CD4-positive, alpha-beta T cell (primary cell): ENCODE measurements at regions of chr12 and their contacts with region 1.

Region 1: GRCh38 chr12:14845350-14845750 is 2.0 kb upstream of the ART4 start:
- DNase-seq: peak in 12 of 14 experiments; percentile 8 to 74 (median 34)
- ATAC-seq: peak; percentile 68
- H3K4me3 ChIP-seq: no peak overlapping the region
- H3K4me3 Mint-ChIP-seq: no peak overlapping the region
- H3K27ac ChIP-seq: no peak overlapping the region
- H3K27ac Mint-ChIP-seq: no peak overlapping the region
- H3K4me1 ChIP-seq: peaks cover 3% of the 10 kb centered on the region
- H3K4me1 Mint-ChIP-seq: peaks cover 9% of the 10 kb centered on the region
- H3K27me3 ChIP-seq: no peaks in the 10 kb centered on the region
- H3K27me3 Mint-ChIP-seq: no peaks in the 10 kb centered on the region
- CTCF ChIP-seq: peak; percentile 79

Region 2: GRCh38 chr12:14873440-14874185 is 28.3 kb after region 1 on chr12:
- CTCF ChIA-PET with region 1: no interaction called
- POLR2A ChIA-PET with region 1: no interaction called
- intact Hi-C with region 1: no loop called
- DNase-seq: no peak
- ATAC-seq: no peak
- H3K4me3 ChIP-seq: no peak overlapping the region
- H3K4me3 Mint-ChIP-seq: no peak overlapping the region
- H3K27ac ChIP-seq: no peak overlapping the region
- H3K27ac Mint-ChIP-seq: no peak overlapping the region
- H3K4me1 ChIP-seq: no peaks in the 10 kb centered on the region
- H3K4me1 Mint-ChIP-seq: no peaks in the 10 kb centered on the region
- H3K27me3 ChIP-seq: peaks cover 0 to 2% of the 10 kb centered on the region in 2 experiments
- H3K27me3 Mint-ChIP-seq: no peaks in the 10 kb centered on the region
- CTCF ChIP-seq: no peak

Region 3: GRCh38 chr12:14884458-14884878 is 39.1 kb after region 1 on chr12:
- CTCF ChIA-PET with region 1: no interaction called
- POLR2A ChIA-PET with region 1: no interaction called
- intact Hi-C with region 1: loop called in 1 of 2 experiments (anchors 5 kb)
- DNase-seq: peak; percentile 68 to 93 (median 82)
- ATAC-seq: peak; percentile 91
- H3K4me3 ChIP-seq: peak overlapping the region; percentile 7
- H3K4me3 Mint-ChIP-seq: peak overlapping the region; percentile 75
- H3K27ac ChIP-seq: no peak overlapping the region
- H3K27ac Mint-ChIP-seq: peak overlapping the region; percentile 86
- H3K4me1 ChIP-seq: peaks cover 11% of the 10 kb centered on the region
- H3K4me1 Mint-ChIP-seq: peaks cover 47% of the 10 kb centered on the region
- H3K27me3 ChIP-seq: no peaks in the 10 kb centered on the region
- H3K27me3 Mint-ChIP-seq: no peaks in the 10 kb centered on the region
- CTCF ChIP-seq: no peak

Region 4: GRCh38 chr12:14896521-14897169 is 51.3 kb after region 1 on chr12:
- CTCF ChIA-PET with region 1: no interaction called
- POLR2A ChIA-PET with region 1: no interaction called
- intact Hi-C with region 1: loop called in 1 of 2 experiments (anchors 5 kb)
- DNase-seq: no peak
- ATAC-seq: no peak
- H3K4me3 ChIP-seq: no peak overlapping the region
- H3K4me3 Mint-ChIP-seq: no peak overlapping the region
- H3K27ac ChIP-seq: no peak overlapping the region
- H3K27ac Mint-ChIP-seq: no peak overlapping the region
- H3K4me1 ChIP-seq: no peaks in the 10 kb centered on the region
- H3K4me1 Mint-ChIP-seq: no peaks in the 10 kb centered on the region
- H3K27me3 ChIP-seq: no peaks in the 10 kb centered on the region
- H3K27me3 Mint-ChIP-seq: no peaks in the 10 kb centered on the region
- CTCF ChIP-seq: no peak

Region 5: DNA sequence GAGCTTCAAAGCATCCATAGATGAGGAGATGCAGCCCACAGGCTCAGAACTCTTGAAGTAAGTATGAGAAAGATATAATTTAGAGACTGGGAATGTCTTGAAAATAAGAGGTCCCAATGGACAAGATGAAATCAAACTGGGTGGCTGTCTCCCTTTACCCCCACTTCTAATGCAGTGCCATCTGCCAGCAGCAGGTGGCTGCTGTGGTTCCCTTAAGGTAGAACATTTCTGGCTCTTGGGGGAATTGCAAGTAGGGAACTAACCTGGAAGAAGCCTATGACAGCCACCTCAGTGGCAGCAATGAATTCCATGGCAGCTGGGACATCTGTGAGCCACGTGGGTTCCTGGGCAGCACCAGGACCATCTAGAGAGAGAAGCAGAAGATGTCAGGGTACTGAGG is 92.3 kb after region 1 on chr12:
- CTCF ChIA-PET with region 1: no interaction called
- POLR2A ChIA-PET with region 1: no interaction called
- intact Hi-C with region 1: loop called in 1 of 2 experiments (anchors 2 kb)
- DNase-seq: peak in 5 of 14 experiments; percentile 33 to 68 (median 55)
- ATAC-seq: peak; percentile 35
- H3K4me3 ChIP-seq: no peak overlapping the region
- H3K4me3 Mint-ChIP-seq: no peak overlapping the region
- H3K27ac ChIP-seq: no peak overlapping the region
- H3K27ac Mint-ChIP-seq: peak overlapping the region; percentile 72
- H3K4me1 ChIP-seq: peaks cover 17% of the 10 kb centered on the region
- H3K4me1 Mint-ChIP-seq: peaks cover 63% of the 10 kb centered on the region
- H3K27me3 ChIP-seq: no peaks in the 10 kb centered on the region
- H3K27me3 Mint-ChIP-seq: no peaks in the 10 kb centered on the region
- CTCF ChIP-seq: peak; percentile 59

Region 6: DNA sequence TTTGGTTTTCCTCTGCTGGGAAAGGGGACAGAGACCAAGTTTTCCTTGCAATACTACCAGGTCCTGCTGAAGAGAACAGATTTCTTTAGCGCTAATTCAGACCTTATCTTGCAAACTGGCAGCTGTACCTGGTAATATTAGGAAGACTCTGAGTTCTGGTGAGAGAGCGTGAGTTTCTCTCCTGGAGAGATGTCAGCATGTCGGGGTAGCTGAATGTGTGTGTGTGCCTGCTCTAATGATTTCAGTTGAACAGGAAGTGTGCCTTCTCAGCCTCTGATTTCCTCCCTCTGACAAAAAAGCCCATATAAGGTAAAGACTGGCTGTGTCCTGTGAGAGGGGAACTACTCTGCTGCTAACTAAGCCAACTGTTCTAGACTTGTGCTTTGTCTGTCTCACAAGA is 103.3 kb after region 1 on chr12:
- CTCF ChIA-PET with region 1: interaction called, 3 read pairs
- POLR2A ChIA-PET with region 1: no interaction called
- intact Hi-C with region 1: loop called in 1 of 2 experiments (anchors 5 kb)
- DNase-seq: peak in 9 of 14 experiments; percentile 29 to 92 (median 57)
- ATAC-seq: peak; percentile 85
- H3K4me3 ChIP-seq: peak overlapping the region; percentile 34
- H3K4me3 Mint-ChIP-seq: peak overlapping the region; percentile 81
- H3K27ac ChIP-seq: peak overlapping the region; percentile 90 to 95
- H3K27ac Mint-ChIP-seq: peak overlapping the region; percentile 94
- H3K4me1 ChIP-seq: peaks cover 66% of the 10 kb centered on the region
- H3K4me1 Mint-ChIP-seq: peaks cover 92% of the 10 kb centered on the region
- H3K27me3 ChIP-seq: no peaks in the 10 kb centered on the region
- H3K27me3 Mint-ChIP-seq: no peaks in the 10 kb centered on the region
- CTCF ChIP-seq: no peak

Region 7: DNA sequence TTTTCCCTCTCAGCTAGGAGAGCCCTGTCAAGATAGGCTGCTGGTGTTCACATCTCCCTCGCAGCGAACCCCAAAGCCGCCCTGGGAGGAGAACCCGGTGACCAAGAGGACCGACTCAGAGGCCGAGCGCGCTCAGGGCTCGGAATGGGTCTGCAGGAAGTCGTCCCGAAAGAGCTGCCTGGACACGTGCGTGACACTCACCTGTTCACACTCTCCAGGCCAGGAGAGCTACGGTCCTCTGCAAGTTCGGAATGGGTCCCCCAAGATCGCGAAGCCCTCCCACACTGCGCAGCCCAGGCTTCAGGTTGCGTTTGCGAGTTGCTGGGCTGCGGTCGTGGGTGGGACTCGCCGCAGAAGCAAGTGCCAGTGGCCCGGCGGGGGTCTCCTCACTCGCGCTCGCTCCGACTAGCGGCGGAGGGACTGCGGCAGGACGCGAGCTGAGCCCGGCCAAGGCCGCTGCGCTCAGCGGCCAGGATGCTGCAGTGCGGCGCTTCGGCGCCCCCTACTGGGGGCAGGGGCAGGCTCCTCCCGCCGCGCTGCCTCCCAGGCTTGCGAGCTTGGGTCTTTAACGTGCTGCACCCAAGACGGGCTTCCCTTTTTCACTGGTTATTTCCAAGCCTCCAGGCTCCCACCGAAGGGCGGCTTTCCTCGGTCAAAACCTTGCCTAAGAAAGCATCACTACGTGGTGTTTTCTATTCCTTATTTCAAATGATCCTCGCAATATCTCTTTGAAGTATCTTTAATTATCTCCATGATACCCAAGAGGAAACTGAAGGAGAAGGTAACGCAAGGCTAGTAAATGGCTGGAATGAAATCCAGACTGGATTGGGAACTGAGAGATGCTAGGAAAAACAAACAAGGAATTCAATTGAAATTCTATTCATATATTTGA is 375.9 kb after region 1 on chr12 and contains the start of gene RERG:
- CTCF ChIA-PET with region 1: no interaction called
- POLR2A ChIA-PET with region 1: no interaction called
- intact Hi-C with region 1: loop called (anchors 2 kb)
- DNase-seq: peak; percentile 50 to 86 (median 68)
- ATAC-seq: peak; percentile 99
- H3K4me3 ChIP-seq: peak within 1 kb of the TSS; percentile 49
- H3K4me3 Mint-ChIP-seq: peak within 1 kb of the TSS; percentile 71
- H3K27ac ChIP-seq: no peak within 1 kb of the TSS
- H3K27ac Mint-ChIP-seq: no peak within 1 kb of the TSS
- H3K4me1 ChIP-seq: peaks cover 10% of the 10 kb centered on the region
- H3K4me1 Mint-ChIP-seq: peaks cover 13% of the 10 kb centered on the region
- H3K27me3 ChIP-seq: peaks cover 7 to 34% of the 10 kb centered on the region in 2 experiments
- H3K27me3 Mint-ChIP-seq: peaks cover 42% of the 10 kb centered on the region
- CTCF ChIP-seq: peak; percentile 94
- total RNA-seq, gene RERG: not detected

Region 8: GRCh38 chr12:15268927-15269552 is 423.7 kb after region 1 on chr12:
- CTCF ChIA-PET with region 1: no interaction called
- POLR2A ChIA-PET with region 1: no interaction called
- intact Hi-C with region 1: loop called in 1 of 2 experiments (anchors 2 kb)
- DNase-seq: peak in 11 of 14 experiments; percentile 3 to 74 (median 15)
- ATAC-seq: peak; percentile 77
- H3K4me3 ChIP-seq: no peak overlapping the region
- H3K4me3 Mint-ChIP-seq: no peak overlapping the region
- H3K27ac ChIP-seq: no peak overlapping the region
- H3K27ac Mint-ChIP-seq: no peak overlapping the region
- H3K4me1 ChIP-seq: no peaks in the 10 kb centered on the region
- H3K4me1 Mint-ChIP-seq: no peaks in the 10 kb centered on the region
- H3K27me3 ChIP-seq: peaks cover 2 to 5% of the 10 kb centered on the region in 2 experiments
- H3K27me3 Mint-ChIP-seq: peaks cover 9% of the 10 kb centered on the region
- CTCF ChIP-seq: peak; percentile 88